ENCODE measurements at regions of chr11 and their contacts with region 1.

Region 1: DNA sequence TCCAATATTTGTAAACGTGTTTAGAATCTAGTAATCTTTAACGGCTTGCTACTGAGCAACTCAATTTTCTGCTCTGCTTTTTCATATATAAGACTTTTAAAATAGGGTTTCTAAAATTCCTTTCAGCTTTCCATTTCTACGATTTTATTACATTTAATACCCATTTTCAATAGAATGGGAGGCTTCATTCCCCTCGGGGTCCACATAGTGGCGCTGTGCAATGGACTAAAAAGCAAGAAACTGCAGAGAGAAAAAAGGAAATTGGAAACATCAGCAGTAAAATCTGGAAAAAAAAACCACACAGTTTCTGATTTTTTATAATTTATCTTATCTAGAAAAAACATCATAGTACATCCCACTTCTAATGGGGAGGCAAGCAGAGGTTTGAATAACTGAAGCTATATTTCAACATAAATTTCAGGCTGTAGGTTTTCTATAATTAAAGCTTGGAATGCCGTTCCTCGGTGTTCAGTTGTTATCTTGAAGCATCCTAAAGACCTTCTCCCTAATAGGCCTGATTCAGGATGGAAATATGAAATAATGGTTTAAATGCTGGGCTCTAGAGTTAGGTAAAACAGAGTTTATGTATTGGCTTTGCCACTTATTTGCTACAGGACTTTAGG is 18.7 kb upstream of the JHY start:
- DNase-seq: no peak
- H3K4me3 ChIP-seq: no peak overlapping the region
- CTCF ChIP-seq: peak; percentile 61

Region 2: GRCh38 chr11:122741613-122742300 is 122.1 kb before region 1 on chr11:
- CTCF ChIA-PET with region 1: no interaction called
- POLR2A ChIA-PET with region 1: no interaction called
- DNase-seq: no peak
- H3K4me3 ChIP-seq: no peak overlapping the region
- CTCF ChIP-seq: no peak

Region 3: GRCh38 chr11:122874991-122875390 is 11.2 kb after region 1 on chr11:
- CTCF ChIA-PET with region 1: interaction called, 90 read pairs
- POLR2A ChIA-PET with region 1: no interaction called
- DNase-seq: no peak
- H3K4me3 ChIP-seq: no peak overlapping the region
- CTCF ChIP-seq: no peak

Region 4: DNA sequence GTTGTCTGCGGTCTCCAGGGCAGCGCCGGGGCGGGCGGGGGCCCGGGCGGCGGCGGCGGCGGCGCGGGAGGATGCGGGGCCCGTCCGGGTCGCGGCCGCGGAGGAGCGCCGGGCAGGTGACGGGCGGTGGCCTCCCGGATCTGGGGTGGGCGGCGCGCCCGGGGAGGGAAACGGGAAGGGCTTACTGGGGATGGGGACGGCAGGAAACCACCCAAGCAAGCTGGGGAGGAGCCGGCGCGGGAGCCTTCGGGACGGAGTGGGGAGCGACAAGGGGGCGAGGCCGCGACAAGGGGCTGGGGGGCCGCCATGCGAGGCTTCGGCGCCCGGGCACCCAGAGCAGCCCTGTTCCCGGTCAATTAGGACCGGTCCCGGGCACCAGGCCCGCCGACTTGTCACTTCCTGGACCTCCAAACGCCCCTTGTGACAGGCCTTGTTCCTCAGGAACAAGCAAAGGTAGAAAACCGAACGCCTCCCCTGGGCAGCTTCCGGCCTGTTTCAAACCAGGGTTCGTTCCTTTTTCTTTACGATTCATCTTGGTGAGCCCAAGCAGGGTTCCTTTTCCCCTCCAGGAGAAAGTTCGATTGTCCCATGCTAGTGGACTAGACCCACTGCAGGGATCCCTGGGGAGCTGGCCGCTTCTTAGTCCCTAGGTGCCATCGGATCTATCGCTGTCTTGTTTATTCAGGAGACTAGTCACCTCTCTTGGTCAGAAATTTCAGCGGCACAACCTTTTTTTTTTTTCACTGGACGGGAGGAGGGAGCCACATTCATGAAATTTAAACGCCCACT is 19.2 kb after region 1 on chr11:
- CTCF ChIA-PET with region 1: interaction called, 90 read pairs
- POLR2A ChIA-PET with region 1: no interaction called
- DNase-seq: no peak
- H3K4me3 ChIP-seq: peak overlapping the region; percentile 65
- CTCF ChIP-seq: no peak

Measured in AG04449 (cell line).